ENCODE measurements at regions of chr1 and their contacts with region 1.

Region 1: GRCh38 chr1:85307987-85308832 is 31.8 kb upstream of the BCL10 start:
- H3K4me3 ChIP-seq: no peak overlapping the region
- H3K27ac ChIP-seq: no peak overlapping the region
- H3K4me1 ChIP-seq: 0 out of 2 replicates have a peak, but pooled peaks cover 3% of the 10 kb centered on the region
- CTCF ChIP-seq: peak; percentile 97

Region 2: DNA sequence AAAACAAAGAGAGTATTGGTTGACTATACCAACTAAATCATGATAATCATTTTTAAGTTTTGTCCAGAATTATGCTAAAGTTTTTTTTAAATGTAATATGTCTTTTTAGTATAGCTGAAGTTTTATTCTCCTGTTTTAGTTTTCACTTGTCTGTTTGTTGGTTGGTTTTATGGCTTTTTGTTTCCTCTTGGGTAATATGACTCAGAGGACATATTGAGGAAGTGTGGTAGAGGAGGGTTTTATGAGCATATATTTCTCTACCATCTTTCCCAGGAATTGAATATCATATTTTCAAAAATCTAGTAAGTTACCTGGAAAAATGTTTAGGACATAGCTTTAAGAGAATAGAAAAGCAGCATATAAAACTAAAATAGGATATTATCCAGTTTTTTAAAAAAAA is 191.4 kb before region 1 on chr1:
- CTCF ChIA-PET with region 1: no interaction called
- POLR2A ChIA-PET with region 1: no interaction called
- H3K4me3 ChIP-seq: no peak overlapping the region
- H3K27ac ChIP-seq: no peak overlapping the region
- H3K4me1 ChIP-seq: no peaks in the 10 kb centered on the region
- CTCF ChIP-seq: no peak

Region 3: GRCh38 chr1:85297855-85298629 is 10.2 kb before region 1 on chr1:
- CTCF ChIA-PET with region 1: interaction called, 16 read pairs
- POLR2A ChIA-PET with region 1: no interaction called
- H3K4me3 ChIP-seq: no peak overlapping the region; the same call in 1 of the 2 replicates
- H3K27ac ChIP-seq: peak overlapping the region; percentile 76
- H3K4me1 ChIP-seq: peaks cover 18% of the 10 kb centered on the region
- CTCF ChIP-seq: no peak

Region 4: GRCh38 chr1:85344256-85344694 is 36.1 kb after region 1 on chr1:
- CTCF ChIA-PET with region 1: interaction called, 18 read pairs
- POLR2A ChIA-PET with region 1: interaction called, 3 read pairs
- H3K4me3 ChIP-seq: no peak overlapping the region
- H3K27ac ChIP-seq: no peak overlapping the region
- H3K4me1 ChIP-seq: peaks cover 21% of the 10 kb centered on the region
- CTCF ChIP-seq: peak; percentile 78

Region 5: DNA sequence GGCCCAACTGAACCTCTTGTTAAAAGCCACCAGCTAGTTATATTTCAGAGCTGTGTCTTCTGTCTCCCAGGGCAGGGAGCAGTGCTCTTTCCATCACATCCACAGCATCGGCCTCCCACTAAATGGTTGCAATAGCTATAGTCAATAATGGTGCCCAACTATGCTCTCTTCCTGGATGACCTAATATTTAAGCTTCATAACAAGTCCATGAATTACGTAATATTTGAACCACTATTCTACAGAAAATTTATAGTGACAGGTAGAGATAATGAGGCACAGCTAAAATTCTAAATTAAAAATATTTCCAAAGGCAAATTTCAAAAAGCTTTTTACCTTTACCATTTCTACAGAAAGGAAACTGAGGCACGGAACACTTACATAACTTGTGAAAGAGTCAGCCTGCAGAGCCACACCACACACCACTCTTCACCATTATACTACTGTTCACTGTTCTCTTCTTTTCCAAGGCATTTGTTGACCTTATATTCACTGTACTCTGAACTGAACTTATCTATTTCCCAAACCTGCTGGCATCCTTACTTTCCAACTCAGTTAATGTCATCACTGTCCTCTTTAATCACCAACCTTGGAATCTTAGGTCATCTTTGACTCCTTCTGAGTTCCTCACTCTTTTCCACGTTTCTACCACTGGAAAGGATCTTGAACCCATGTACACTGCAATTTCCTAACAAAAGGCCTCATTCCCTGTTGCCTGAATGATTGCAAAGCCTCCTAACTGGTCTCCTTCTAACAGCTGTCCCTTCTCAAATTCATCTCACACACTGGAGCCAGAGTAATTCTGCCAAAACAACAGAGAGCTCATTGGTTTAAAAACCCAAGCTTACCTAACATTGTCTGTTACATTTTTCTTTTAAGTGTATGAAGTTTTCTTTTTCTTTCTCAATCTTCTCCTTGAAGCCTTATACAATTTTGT is 71.3 kb after region 1 on chr1:
- CTCF ChIA-PET with region 1: no interaction called
- POLR2A ChIA-PET with region 1: no interaction called
- H3K4me3 ChIP-seq: no peak overlapping the region
- H3K27ac ChIP-seq: no peak overlapping the region
- H3K4me1 ChIP-seq: no peaks in the 10 kb centered on the region
- CTCF ChIP-seq: no peak

Region 6: DNA sequence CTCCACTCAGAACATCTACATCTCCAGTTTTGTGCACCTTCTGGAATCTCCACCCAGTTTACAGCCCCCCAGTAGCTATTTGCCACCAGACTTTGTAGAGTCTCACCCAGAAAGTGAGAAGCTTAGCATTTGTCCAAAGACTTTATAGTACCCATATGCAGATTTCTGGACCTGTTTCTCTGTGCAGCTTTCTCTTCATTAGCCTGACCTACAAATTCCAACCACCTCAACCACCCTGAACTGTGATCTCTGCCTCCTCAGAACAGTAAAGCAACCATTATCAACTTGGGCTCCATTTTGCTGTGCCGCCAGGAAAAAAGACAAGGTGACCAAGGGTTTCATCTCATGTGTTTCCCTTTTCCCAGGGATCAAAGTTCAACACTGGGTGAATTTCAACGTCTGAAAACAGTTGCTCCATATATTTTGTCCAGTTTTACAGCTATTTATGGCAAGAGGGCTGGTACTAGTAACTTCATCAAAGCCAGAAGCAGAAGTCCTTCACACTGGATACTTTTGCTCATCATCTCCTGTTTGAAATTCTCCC is 193.2 kb after region 1 on chr1:
- CTCF ChIA-PET with region 1: interaction called, 11 read pairs
- POLR2A ChIA-PET with region 1: no interaction called
- H3K4me3 ChIP-seq: no peak overlapping the region
- H3K27ac ChIP-seq: no peak overlapping the region
- H3K4me1 ChIP-seq: no peaks in the 10 kb centered on the region
- CTCF ChIP-seq: no peak

Region 7: DNA sequence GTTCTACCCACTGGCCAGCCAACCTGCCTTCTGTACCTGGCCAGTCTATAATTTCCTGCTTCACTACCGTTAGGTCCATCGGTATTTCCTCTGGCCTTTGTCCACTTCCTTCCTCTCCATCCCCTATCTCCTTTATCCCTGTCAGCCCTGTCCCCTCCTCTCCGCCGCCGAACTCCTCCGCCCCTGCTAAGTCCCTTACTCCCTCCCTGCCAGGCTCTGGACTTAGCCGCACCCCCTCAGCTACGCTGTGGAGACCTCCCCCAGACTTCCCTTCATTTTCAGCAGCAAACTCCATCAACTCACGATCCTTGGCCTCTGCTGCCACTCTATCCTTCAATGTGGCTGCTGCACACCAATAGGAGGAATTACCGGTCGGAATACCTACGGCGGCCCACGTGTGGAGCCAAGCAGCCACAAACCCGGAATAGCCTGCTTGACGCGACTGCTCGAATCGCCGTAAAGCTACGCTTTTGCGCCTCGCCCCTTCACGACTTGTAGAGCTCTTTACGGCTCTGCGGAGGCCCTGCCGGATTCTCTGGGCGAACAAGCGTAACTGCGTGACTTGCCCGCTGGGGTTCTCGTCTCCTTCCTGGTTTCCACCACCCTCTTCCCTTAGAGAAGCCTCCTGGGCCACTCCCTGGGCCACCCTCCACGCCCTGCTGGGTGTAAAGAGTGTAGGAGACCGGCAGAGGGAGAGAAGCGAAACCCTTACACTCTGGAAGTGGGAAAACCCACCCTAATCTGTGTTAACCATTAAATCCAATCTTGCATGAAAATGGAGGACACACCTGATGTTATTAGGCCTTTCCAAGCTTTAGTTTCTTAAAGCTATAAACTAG is 400.0 kb after region 1 on chr1 and contains the start of gene ZNHIT6:
- CTCF ChIA-PET with region 1: interaction called, 12 read pairs
- POLR2A ChIA-PET with region 1: no interaction called
- H3K4me3 ChIP-seq: peak within 1 kb of the TSS; percentile 77
- H3K27ac ChIP-seq: peak within 1 kb of the TSS; percentile 62
- H3K4me1 ChIP-seq: 0 out of 2 replicates have a peak, but pooled peaks cover 3% of the 10 kb centered on the region
- CTCF ChIP-seq: peak; percentile 58

Measured in HEK293 (cell line).